ENCODE measurements at regions of chr6 and their contacts with region 1.

Region 1: GRCh38 chr6:53348371-53349208 is at the start of gene ELOVL5:
- DNase-seq: peak; percentile 73 to 98 (median 94)
- ATAC-seq: peak; percentile 69 to 82 (median 72)
- H3K4me3 ChIP-seq: peak within 1 kb of the TSS; percentile 71 to 91
- H3K4me3 Mint-ChIP-seq: peak within 1 kb of the TSS; percentile 89 to 97 (median 95)
- H3K27ac ChIP-seq: peak within 1 kb of the TSS; percentile 81
- H3K27ac Mint-ChIP-seq: peak within 1 kb of the TSS; percentile 91 to 96
- H3K4me1 ChIP-seq: peaks cover 16 to 25% of the 10 kb centered on the region in 2 experiments
- H3K4me1 Mint-ChIP-seq: peaks cover 47 to 53% (median 48%) of the 10 kb centered on the region in 3 donors
- H3K27me3 ChIP-seq: no peaks in the 10 kb centered on the region
- H3K27me3 Mint-ChIP-seq: no peaks in the 10 kb centered on the region
- total RNA-seq, gene ELOVL5: 71.4 to 101 (median 86.5) TPM

Region 2: DNA sequence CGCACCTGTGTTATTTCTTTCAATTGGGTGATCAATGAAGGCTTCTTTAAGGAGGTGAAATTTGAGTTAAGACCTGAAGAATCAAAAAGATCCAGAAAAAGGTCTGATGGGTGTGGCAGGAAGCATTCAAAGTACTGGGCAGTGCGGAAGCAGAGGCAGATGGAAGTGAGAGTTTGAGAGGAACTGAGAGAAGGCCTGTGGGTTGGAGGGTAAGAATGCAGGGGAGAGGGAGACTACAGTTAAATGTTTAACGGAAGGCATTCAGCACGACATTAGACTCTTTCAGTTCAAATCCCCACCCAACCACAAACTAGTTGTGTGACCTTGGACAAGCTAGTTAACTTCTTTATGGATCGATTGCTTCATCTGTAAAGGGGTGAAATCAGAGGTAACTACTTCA is 149.4 kb before region 1 on chr6:
- CTCF ChIA-PET with region 1: no interaction called
- POLR2A ChIA-PET with region 1: no interaction called
- DNase-seq: peak in 1 of 35 experiments; percentile 12
- ATAC-seq: no peak
- H3K4me3 ChIP-seq: no peak overlapping the region
- H3K4me3 Mint-ChIP-seq: no peak overlapping the region
- H3K27ac ChIP-seq: no peak overlapping the region
- H3K27ac Mint-ChIP-seq: no peak overlapping the region
- H3K4me1 ChIP-seq: no peaks in the 10 kb centered on the region
- H3K4me1 Mint-ChIP-seq: peaks cover 1 to 15% (median 4%) of the 10 kb centered on the region in 3 donors
- H3K27me3 ChIP-seq: no peaks in the 10 kb centered on the region
- H3K27me3 Mint-ChIP-seq: no peaks in the 10 kb centered on the region

Region 3: GRCh38 chr6:53244958-53245357 is 103.6 kb before region 1 on chr6:
- CTCF ChIA-PET with region 1: no interaction called
- POLR2A ChIA-PET with region 1: interaction called in 1 of 2 experiments, 11 read pairs
- DNase-seq: peak in 13 of 35 experiments; percentile 1 to 40 (median 5)
- ATAC-seq: peak in 3 of 4 experiments; percentile 42 to 55 (median 52)
- H3K4me3 ChIP-seq: no peak overlapping the region
- H3K4me3 Mint-ChIP-seq: no peak overlapping the region
- H3K27ac ChIP-seq: no peak overlapping the region
- H3K27ac Mint-ChIP-seq: no peak overlapping the region
- H3K4me1 ChIP-seq: peaks cover 4 to 18% of the 10 kb centered on the region in 2 experiments
- H3K4me1 Mint-ChIP-seq: peaks cover 26 to 45% (median 29%) of the 10 kb centered on the region in 3 donors
- H3K27me3 ChIP-seq: no peaks in the 10 kb centered on the region
- H3K27me3 Mint-ChIP-seq: no peaks in the 10 kb centered on the region

Region 4: DNA sequence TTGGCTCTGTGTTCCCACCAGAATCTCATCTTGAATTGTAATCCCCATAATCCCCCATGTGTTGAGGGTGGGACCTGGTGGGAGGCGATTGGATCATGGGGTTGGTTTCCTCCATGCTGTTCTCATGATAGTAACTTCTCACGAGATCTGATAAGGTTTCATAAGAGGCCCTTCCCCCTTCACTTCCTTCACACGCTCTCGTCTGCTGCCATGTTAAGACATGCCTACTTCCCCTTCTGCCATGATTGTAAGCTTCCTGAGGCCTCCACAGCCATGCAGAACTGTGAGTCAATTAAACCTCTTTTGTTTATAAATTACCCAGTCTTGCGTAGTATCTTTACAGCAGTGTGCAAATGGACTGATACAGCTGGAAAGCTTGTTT is 89.8 kb before region 1 on chr6:
- CTCF ChIA-PET with region 1: no interaction called
- POLR2A ChIA-PET with region 1: no interaction called
- DNase-seq: no peak
- ATAC-seq: no peak
- H3K4me3 ChIP-seq: no peak overlapping the region
- H3K4me3 Mint-ChIP-seq: no peak overlapping the region
- H3K27ac ChIP-seq: no peak overlapping the region
- H3K27ac Mint-ChIP-seq: no peak overlapping the region
- H3K4me1 ChIP-seq: no peaks in the 10 kb centered on the region
- H3K4me1 Mint-ChIP-seq: peaks cover 0 to 9% (median 0%) of the 10 kb centered on the region in 3 donors
- H3K27me3 ChIP-seq: no peaks in the 10 kb centered on the region
- H3K27me3 Mint-ChIP-seq: no peaks in the 10 kb centered on the region

Region 5: DNA sequence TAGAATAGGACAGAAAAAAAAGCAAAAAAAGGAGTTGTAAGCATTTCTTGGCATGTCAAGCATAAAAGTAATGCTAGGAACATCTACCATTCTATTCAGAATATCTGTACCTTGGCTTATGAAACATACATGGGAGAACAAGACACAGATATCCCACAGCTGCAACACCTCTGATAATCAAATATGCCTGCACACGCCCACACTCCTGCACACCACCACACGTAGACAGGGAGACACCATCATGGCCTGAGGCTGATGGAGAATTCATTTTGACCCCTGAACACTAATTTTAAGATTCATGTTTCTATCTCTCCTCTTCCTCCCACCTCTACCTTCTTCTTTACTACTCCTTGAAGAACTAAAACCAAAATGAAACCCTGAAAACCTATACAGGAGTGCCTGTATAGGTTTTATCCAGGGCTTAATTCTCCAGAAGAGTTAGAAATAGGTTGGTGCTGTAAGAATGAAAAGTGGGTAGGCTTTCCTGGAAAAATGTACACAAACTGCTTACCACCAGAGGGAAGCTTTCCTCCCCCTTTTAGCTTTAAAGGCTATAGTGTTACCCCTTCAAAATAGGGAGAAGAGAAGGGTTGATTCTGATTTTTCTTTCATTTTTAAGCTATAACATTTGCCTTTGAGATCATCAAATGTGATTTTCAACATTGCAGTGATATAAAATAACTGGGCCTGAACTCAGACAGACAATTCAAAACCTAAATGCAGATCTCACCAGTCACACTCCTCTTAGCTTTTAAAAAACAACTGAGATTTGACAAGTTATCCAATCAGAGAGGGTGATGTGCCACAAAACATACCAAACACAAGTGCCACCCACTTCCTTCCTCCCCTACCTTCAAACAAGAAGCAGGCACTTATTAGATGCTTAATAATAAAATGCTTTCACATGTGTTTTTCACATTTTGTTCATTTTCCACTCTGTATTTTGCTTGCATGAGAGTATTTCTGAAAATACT is 57.8 kb before region 1 on chr6:
- CTCF ChIA-PET with region 1: interaction called in 1 of 2 experiments, 7 read pairs
- POLR2A ChIA-PET with region 1: interaction called in 1 of 2 experiments, 10 read pairs
- DNase-seq: peak in 24 of 35 experiments; percentile 11 to 71 (median 26)
- ATAC-seq: peak; percentile 86 to 95 (median 91)
- H3K4me3 ChIP-seq: no peak overlapping the region
- H3K4me3 Mint-ChIP-seq: peak overlapping the region; percentile 14 to 53 (median 15)
- H3K27ac ChIP-seq: peak overlapping the region; percentile 72
- H3K27ac Mint-ChIP-seq: peak overlapping the region; percentile 90 to 92
- H3K4me1 ChIP-seq: peaks cover 44 to 54% of the 10 kb centered on the region in 2 experiments
- H3K4me1 Mint-ChIP-seq: peaks cover 77 to 90% (median 79%) of the 10 kb centered on the region in 3 donors
- H3K27me3 ChIP-seq: no peaks in the 10 kb centered on the region
- H3K27me3 Mint-ChIP-seq: no peaks in the 10 kb centered on the region

Region 6: GRCh38 chr6:53300656-53301551 is 47.7 kb before region 1 on chr6:
- CTCF ChIA-PET with region 1: interaction called, 3 to 7 read pairs
- POLR2A ChIA-PET with region 1: interaction called, 7 to 13 read pairs
- DNase-seq: peak in 30 of 35 experiments; percentile 5 to 60 (median 25)
- ATAC-seq: peak in 1 of 4 experiments; percentile 57
- H3K4me3 ChIP-seq: no peak overlapping the region
- H3K4me3 Mint-ChIP-seq: peak overlapping the region; percentile 21 to 75 (median 25)
- H3K27ac ChIP-seq: peak overlapping the region; percentile 35
- H3K27ac Mint-ChIP-seq: peak overlapping the region; percentile 79 to 83
- H3K4me1 ChIP-seq: peaks cover 37 to 40% of the 10 kb centered on the region in 2 experiments
- H3K4me1 Mint-ChIP-seq: peaks cover 80 to 85% (median 81%) of the 10 kb centered on the region in 3 donors
- H3K27me3 ChIP-seq: no peaks in the 10 kb centered on the region
- H3K27me3 Mint-ChIP-seq: no peaks in the 10 kb centered on the region

Region 7: GRCh38 chr6:53330137-53330536 is 18.5 kb before region 1 on chr6:
- CTCF ChIA-PET with region 1: interaction called in 1 of 2 experiments, 3 read pairs
- POLR2A ChIA-PET with region 1: interaction called, 10 to 38 read pairs
- DNase-seq: no peak
- ATAC-seq: no peak
- H3K4me3 ChIP-seq: no peak overlapping the region
- H3K4me3 Mint-ChIP-seq: no peak overlapping the region
- H3K27ac ChIP-seq: no peak overlapping the region
- H3K27ac Mint-ChIP-seq: no peak overlapping the region
- H3K4me1 ChIP-seq: peaks cover 30 to 53% of the 10 kb centered on the region in 2 experiments
- H3K4me1 Mint-ChIP-seq: peaks cover 82 to 86% (median 83%) of the 10 kb centered on the region in 3 donors
- H3K27me3 ChIP-seq: no peaks in the 10 kb centered on the region
- H3K27me3 Mint-ChIP-seq: no peaks in the 10 kb centered on the region

Region 8: DNA sequence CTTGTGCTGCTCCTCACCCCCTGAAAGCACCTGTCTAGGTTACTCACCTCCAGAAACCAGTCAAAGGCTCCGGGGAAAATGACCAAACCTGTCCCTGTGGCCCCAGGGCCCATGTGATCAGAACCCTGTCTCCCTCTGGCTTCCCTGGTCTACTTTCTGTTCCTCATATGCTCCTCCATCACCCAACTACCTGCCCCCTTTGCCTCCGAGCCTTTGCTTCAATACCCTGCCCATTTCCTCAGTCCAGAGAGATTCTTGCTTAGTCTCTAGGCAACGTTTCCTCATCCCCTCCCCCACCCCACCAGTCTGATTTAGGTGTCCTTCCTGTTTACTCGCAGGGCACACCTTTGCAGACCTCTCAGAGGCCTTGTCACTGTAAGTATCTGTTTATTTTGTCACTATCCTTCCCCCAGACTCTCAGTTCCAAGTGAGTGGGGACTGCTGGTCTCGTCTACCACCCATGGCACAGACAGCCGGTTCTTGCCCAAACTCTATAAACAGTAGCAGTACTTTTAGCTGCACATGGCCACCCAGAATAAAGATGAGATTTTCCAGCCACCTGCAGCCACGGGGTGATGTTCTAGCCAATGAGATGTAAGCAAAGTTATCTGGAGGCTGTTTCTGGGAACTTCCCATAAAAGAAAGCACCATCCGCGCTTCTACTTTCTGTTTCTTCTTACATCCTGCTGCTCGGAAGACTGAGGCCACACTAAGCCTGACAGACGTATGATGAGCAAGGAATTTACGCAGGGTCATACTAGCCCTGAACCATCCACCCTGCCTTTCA is 13.2 kb before region 1 on chr6:
- CTCF ChIA-PET with region 1: interaction called, 6 to 13 read pairs
- POLR2A ChIA-PET with region 1: interaction called, 16 to 38 read pairs
- DNase-seq: peak; percentile 55 to 91 (median 73)
- ATAC-seq: peak; percentile 77 to 88 (median 84)
- H3K4me3 ChIP-seq: peak overlapping the region; percentile 42 to 67
- H3K4me3 Mint-ChIP-seq: peak overlapping the region; percentile 80 to 86 (median 83)
- H3K27ac ChIP-seq: peak overlapping the region; percentile 98
- H3K27ac Mint-ChIP-seq: peak overlapping the region; percentile 98 to 99
- H3K4me1 ChIP-seq: peaks cover 50 to 69% of the 10 kb centered on the region in 2 experiments
- H3K4me1 Mint-ChIP-seq: peaks cover 90 to 95% (median 93%) of the 10 kb centered on the region in 3 donors
- H3K27me3 ChIP-seq: no peaks in the 10 kb centered on the region
- H3K27me3 Mint-ChIP-seq: no peaks in the 10 kb centered on the region

Region 9: GRCh38 chr6:53359072-53359842 is 10.7 kb after region 1 on chr6:
- CTCF ChIA-PET with region 1: interaction called, 3 to 9 read pairs
- POLR2A ChIA-PET with region 1: interaction called, 3 to 33 read pairs
- DNase-seq: peak; percentile 73 to 92 (median 86)
- ATAC-seq: peak; percentile 81 to 96 (median 94)
- H3K4me3 ChIP-seq: peak overlapping the region; percentile 78 to 93
- H3K4me3 Mint-ChIP-seq: peak overlapping the region; percentile 86 to 94 (median 89)
- H3K27ac ChIP-seq: peak overlapping the region; percentile 99
- H3K27ac Mint-ChIP-seq: peak overlapping the region; percentile 97 to 98
- H3K4me1 ChIP-seq: peaks cover 18 to 43% of the 10 kb centered on the region in 2 experiments
- H3K4me1 Mint-ChIP-seq: peaks cover 48 to 54% (median 50%) of the 10 kb centered on the region in 3 donors
- H3K27me3 ChIP-seq: no peaks in the 10 kb centered on the region
- H3K27me3 Mint-ChIP-seq: no peaks in the 10 kb centered on the region

Region 10: DNA sequence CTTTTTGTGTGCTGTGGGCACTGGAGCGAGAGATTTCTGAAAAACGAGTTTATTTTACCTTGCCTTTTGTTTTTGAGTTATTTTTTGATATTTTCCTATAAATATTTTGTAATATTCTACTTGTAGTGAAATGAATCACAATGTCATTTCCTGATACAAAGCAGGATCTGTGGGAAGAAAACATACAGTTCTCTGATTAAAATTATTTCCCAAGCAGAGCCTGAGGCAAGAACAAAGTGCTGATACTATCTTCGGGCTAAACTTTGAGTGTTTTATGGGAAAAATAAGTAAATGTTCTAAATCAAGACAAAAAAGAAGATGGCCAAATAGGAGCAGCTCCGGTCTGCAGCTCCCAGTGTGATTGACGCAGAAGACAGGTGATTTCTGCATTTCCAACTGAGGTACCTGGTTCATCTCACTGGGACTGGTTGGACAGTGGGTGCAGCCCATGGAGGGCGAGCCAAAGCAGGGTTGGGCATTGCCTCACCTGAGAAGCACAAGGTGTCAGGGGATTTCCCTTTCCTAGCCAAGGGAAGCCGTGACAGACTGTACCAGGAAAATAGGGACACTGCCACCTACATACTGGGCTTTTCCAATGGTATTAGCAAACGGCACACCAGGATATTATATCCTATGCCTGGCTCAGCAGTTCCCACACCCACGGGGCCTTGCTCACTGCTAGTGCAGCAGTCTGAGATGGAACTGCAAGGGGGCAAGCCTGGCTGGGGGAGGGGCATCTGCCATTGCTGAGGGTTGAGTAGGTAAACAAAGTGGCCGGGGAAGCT is 34.0 kb after region 1 on chr6:
- CTCF ChIA-PET with region 1: no interaction called
- POLR2A ChIA-PET with region 1: no interaction called
- DNase-seq: no peak
- ATAC-seq: no peak
- H3K4me3 ChIP-seq: no peak overlapping the region
- H3K4me3 Mint-ChIP-seq: no peak overlapping the region
- H3K27ac ChIP-seq: no peak overlapping the region
- H3K27ac Mint-ChIP-seq: no peak overlapping the region
- H3K4me1 ChIP-seq: no peaks in the 10 kb centered on the region
- H3K4me1 Mint-ChIP-seq: no peaks in the 10 kb centered on the region
- H3K27me3 ChIP-seq: peaks cover 0 to 12% of the 10 kb centered on the region in 2 experiments
- H3K27me3 Mint-ChIP-seq: peaks cover 3 to 9% of the 10 kb centered on the region in 2 donors

Region 11: GRCh38 chr6:53771785-53772624 is 423.4 kb after region 1 on chr6:
- CTCF ChIA-PET with region 1: no interaction called
- POLR2A ChIA-PET with region 1: no interaction called
- DNase-seq: no peak
- ATAC-seq: no peak
- H3K4me3 ChIP-seq: no peak overlapping the region
- H3K4me3 Mint-ChIP-seq: no peak overlapping the region
- H3K27ac ChIP-seq: no peak overlapping the region
- H3K27ac Mint-ChIP-seq: no peak overlapping the region
- H3K4me1 ChIP-seq: no peaks in the 10 kb centered on the region
- H3K4me1 Mint-ChIP-seq: no peaks in the 10 kb centered on the region
- H3K27me3 ChIP-seq: no peaks in the 10 kb centered on the region
- H3K27me3 Mint-ChIP-seq: peaks cover 8 to 14% of the 10 kb centered on the region in 2 donors

Measured in T-cell (primary cell).